T-cell (primary cell): ENCODE measurements at regions of chr1 and their contacts with region 1.

Region 1: GRCh38 chr1:87084244-87084836 is 169.9 kb downstream of the HS2ST1 start:
- DNase-seq: peak in 1 of 35 experiments; percentile 59
- ATAC-seq: peak in 1 of 4 experiments; percentile 36
- H3K4me3 ChIP-seq: no peak overlapping the region
- H3K4me3 Mint-ChIP-seq: no peak overlapping the region
- H3K27ac ChIP-seq: no peak overlapping the region
- H3K27ac Mint-ChIP-seq: no peak overlapping the region
- H3K4me1 ChIP-seq: no peaks in the 10 kb centered on the region
- H3K4me1 Mint-ChIP-seq: peaks cover 2 to 7% (median 5%) of the 10 kb centered on the region in 3 donors
- H3K27me3 ChIP-seq: no peaks in the 10 kb centered on the region
- H3K27me3 Mint-ChIP-seq: no peaks in the 10 kb centered on the region

Region 2: GRCh38 chr1:86833461-86834215 is 250.7 kb before region 1 on chr1:
- CTCF ChIA-PET with region 1: interaction called, 24 to 42 read pairs
- POLR2A ChIA-PET with region 1: interaction called in 1 of 2 experiments, 3 read pairs
- DNase-seq: peak; percentile 5 to 78 (median 37)
- ATAC-seq: peak; percentile 45 to 72 (median 53)
- H3K4me3 ChIP-seq: no peak overlapping the region
- H3K4me3 Mint-ChIP-seq: no peak overlapping the region
- H3K27ac ChIP-seq: no peak overlapping the region
- H3K27ac Mint-ChIP-seq: peak overlapping the region in 1 of 2 donors; percentile 13
- H3K4me1 ChIP-seq: peaks cover 0 to 4% of the 10 kb centered on the region in 2 experiments
- H3K4me1 Mint-ChIP-seq: peaks cover 2 to 7% (median 4%) of the 10 kb centered on the region in 3 donors
- H3K27me3 ChIP-seq: no peaks in the 10 kb centered on the region
- H3K27me3 Mint-ChIP-seq: peaks cover 0 to 1% of the 10 kb centered on the region in 2 donors

Region 3: DNA sequence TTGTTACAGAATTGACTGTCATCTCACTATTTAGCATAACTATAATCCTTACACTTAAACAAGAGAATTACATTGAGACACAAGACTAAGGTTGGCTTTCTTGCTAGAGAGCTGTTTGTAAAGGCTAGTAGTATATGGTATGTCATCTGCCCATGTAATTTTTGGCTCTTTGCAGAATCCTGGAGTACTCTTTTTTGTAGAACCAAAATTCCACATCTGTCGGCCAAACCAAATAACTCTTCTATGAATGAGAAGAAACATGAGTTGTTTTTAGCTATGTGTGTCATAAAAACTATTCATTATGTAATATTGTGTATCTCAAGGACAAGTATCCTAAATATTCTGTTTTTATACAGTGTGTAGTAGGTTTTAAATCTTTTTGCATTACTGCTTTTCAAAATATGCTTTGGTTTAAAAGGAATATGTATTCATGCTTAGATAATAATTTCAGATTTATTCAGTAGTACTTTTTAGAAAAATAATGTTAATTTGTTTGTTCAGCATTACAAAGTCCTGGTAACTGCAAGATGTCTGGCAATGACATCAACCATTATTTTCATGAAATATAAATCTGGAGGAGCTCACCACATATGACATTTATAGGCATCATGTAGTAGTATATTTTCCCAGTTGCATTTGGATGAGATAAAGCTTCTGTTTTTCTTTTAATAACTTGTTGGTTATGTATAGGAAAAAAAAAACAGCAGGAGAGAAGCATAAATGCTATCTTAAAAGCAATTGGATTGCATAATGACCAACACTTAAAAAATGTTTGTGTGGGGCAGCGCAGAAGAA is 10.1 kb before region 1 on chr1:
- CTCF ChIA-PET with region 1: interaction called, 10 to 22 read pairs
- POLR2A ChIA-PET with region 1: interaction called in 1 of 2 experiments, 7 read pairs
- DNase-seq: no peak
- ATAC-seq: no peak
- H3K4me3 ChIP-seq: no peak overlapping the region
- H3K4me3 Mint-ChIP-seq: no peak overlapping the region
- H3K27ac ChIP-seq: no peak overlapping the region
- H3K27ac Mint-ChIP-seq: no peak overlapping the region
- H3K4me1 ChIP-seq: no peaks in the 10 kb centered on the region
- H3K4me1 Mint-ChIP-seq: no peaks in the 10 kb centered on the region
- H3K27me3 ChIP-seq: no peaks in the 10 kb centered on the region
- H3K27me3 Mint-ChIP-seq: no peaks in the 10 kb centered on the region